ENCODE measurements at regions of chr1 and their contacts with region 1.

Region 1: GRCh38 chr1:119367427-119368124 is 1.0 kb upstream of the HAO2 start:
- DNase-seq: peak; percentile 53
- ATAC-seq: peak; percentile 72
- H3K4me3 ChIP-seq: no peak overlapping the region
- H3K27ac ChIP-seq: no peak overlapping the region
- H3K4me1 ChIP-seq: peaks cover 69% of the 10 kb centered on the region
- H3K27me3 ChIP-seq: no peaks in the 10 kb centered on the region
- CTCF ChIP-seq: peak; percentile 88
- EP300 ChIP-seq: peak in 1 of 2 experiments; percentile 36; a peak in 1 of 4 replicates
- POLR2A ChIP-seq: no peak
- RAD21 ChIP-seq: peak; percentile 96

Region 2: GRCh38 chr1:119275145-119276134 is 92.1 kb before region 1 on chr1:
- CTCF ChIA-PET with region 1: interaction called, 29 read pairs
- POLR2A ChIA-PET with region 1: no interaction called
- in situ Hi-C with region 1: no loop called
- intact Hi-C with region 1: loop called (anchors 1 kb)
- DNase-seq: peak; percentile 45
- ATAC-seq: peak; percentile 85
- H3K4me3 ChIP-seq: no peak overlapping the region
- H3K27ac ChIP-seq: no peak overlapping the region
- H3K4me1 ChIP-seq: no peaks in the 10 kb centered on the region
- H3K27me3 ChIP-seq: no peaks in the 10 kb centered on the region; a peak in 1 of 5 replicates
- CTCF ChIP-seq: peak; percentile 74
- EP300 ChIP-seq: no peak
- POLR2A ChIP-seq: no peak
- RAD21 ChIP-seq: no peak

Region 3: GRCh38 chr1:119286587-119287181 is 80.9 kb before region 1 on chr1:
- CTCF ChIA-PET with region 1: interaction called, 80 read pairs
- POLR2A ChIA-PET with region 1: no interaction called
- in situ Hi-C with region 1: loop called (anchors 5 kb)
- intact Hi-C with region 1: loop called (anchors 1 kb)
- DNase-seq: peak; percentile 73
- ATAC-seq: peak; percentile 99
- H3K4me3 ChIP-seq: no peak overlapping the region
- H3K27ac ChIP-seq: no peak overlapping the region
- H3K4me1 ChIP-seq: peaks cover 26% of the 10 kb centered on the region
- H3K27me3 ChIP-seq: no peaks in the 10 kb centered on the region
- CTCF ChIP-seq: peak; percentile 84
- EP300 ChIP-seq: no peak
- POLR2A ChIP-seq: no peak
- RAD21 ChIP-seq: peak; percentile 76

Region 4: DNA sequence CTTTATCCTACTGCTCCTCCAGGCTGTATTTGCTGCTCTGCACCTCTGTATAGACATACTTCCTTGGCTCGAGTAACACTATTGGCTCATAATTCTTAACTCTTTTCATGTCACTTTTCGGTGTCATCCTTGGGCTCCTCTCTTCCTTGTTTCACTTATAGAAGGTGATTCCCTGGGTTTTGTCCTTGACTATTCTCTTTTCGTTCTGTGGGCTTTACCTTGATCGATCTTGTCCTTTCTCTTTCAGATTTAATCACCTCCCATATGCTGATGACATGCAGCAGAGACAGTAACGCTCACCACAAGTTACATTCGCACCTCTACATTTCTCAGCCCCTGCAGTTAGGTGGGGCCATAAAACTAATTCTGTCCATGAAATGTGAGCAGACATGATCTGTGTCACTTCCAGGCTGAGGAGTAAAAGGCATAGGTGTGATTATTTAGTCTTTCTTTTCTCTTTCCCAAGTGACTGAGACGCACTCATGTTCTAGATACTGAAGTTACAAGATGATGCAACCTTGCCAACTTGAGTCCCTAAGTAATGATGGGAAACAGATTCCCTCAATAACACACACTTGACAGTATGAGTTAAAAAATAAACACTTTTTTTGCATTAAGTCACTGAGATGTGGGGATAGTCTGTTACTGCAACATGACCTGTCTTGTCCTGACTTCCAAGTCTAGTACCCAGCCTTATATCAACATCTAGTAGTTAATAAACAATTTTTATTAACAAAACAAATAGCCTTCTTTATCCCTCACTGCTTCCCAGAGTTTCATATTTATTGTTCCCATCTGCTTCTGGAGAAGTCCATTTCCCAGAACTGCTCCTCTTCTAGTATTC is 48.9 kb before region 1 on chr1:
- CTCF ChIA-PET with region 1: interaction called, 16 read pairs
- POLR2A ChIA-PET with region 1: no interaction called
- in situ Hi-C with region 1: no loop called
- intact Hi-C with region 1: loop called (anchors 2 kb)
- DNase-seq: no peak
- ATAC-seq: no peak
- H3K4me3 ChIP-seq: no peak overlapping the region
- H3K27ac ChIP-seq: no peak overlapping the region
- H3K4me1 ChIP-seq: no peaks in the 10 kb centered on the region
- H3K27me3 ChIP-seq: no peaks in the 10 kb centered on the region
- CTCF ChIP-seq: no peak
- EP300 ChIP-seq: no peak
- POLR2A ChIP-seq: no peak
- RAD21 ChIP-seq: no peak

Region 5: DNA sequence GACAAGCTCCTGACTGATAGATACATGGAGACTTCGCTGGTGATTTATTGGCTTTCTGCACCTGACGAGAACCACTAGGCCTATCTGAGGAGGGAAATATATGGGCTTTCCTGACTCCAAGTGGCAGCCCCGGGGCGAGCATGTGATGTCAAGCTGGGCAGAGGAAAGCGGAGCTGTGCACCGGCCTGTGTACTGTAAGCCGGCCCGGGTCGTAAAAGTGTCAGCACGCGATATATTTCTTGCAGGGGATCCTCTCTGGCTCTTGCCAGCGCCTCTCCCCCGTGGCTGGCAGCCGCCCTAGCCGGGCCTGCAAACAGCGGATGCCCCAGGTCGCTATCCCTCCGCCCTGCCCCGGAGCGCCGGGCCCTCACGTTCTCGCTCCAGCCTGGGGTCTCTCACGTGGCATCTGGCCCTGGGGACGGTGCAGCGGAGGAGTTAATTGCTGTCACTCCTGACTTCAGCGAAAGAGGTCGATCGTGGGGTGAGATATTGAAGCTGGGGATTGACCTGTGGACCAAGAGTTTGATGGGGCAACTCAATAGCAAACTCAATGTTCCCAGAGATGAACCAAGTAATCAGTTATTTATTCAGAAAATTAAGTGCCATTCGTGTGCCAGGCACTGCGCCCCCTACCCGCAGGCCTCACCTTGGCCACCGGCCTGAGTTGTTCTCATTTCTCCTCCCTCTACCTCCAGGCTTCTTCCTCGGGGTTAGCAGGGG is 40.0 kb before region 1 on chr1:
- CTCF ChIA-PET with region 1: interaction called, 10 read pairs
- POLR2A ChIA-PET with region 1: interaction called, 3 read pairs
- in situ Hi-C with region 1: no loop called
- intact Hi-C with region 1: no loop called
- DNase-seq: peak; percentile 50
- ATAC-seq: peak; percentile 89
- H3K4me3 ChIP-seq: peak overlapping the region; percentile 50 to 75 (median 70)
- H3K27ac ChIP-seq: peak overlapping the region; percentile 74
- H3K4me1 ChIP-seq: peaks cover 35% of the 10 kb centered on the region
- H3K27me3 ChIP-seq: no peaks in the 10 kb centered on the region
- CTCF ChIP-seq: peak; percentile 67
- EP300 ChIP-seq: no peak
- POLR2A ChIP-seq: peak in 1 of 2 experiments; percentile 35; a peak in 1 of 4 replicates
- RAD21 ChIP-seq: no peak